Activated CD4-positive, alpha-beta T cell treated with anti-CD3 and anti-CD28 coated beads, Interleukin-2, amount 10 ng/mL, durations not matched to agents 7 days and 5 days (primary cell): ENCODE measurements at regions of chrX and their contacts with region 1.

Region 1: DNA sequence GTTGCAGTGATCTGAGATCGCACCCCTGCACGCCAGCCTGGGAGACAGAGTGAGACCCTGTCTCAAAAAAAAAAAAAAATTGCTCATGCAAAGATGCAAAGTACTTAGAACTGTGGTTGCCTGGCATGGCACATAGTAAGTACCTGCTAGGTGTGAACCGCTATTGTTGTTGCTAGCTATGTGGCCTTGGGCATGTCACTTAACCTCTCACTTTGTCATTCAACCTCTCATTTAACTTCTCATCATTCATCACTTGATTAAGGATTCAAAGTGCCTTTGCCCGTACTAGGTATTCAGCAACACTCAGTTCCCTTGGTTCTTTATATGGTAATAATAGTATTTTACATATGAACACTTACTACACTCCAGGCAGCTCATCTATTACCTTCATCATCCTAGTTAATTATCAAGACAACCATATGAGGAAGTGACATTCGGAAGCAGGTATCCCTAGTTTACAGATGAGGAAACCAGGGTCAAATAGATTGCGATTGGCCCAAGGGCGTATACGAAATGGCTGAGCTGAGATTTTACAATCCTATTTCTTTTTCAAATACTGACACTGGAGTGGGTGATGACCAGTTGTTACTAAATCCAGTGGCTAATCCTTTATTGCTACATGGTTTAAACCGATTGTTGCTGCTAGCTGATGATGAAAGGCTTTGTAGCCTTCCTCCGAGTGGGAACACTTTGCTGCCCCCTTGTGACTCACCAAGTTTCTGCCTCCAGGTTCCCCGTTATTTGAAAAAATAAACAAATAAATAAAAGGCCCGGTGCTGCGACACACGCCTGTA is 28.8 kb upstream of the SOWAHD start:
- DNase-seq: peak; percentile 71
- H3K4me3 Mint-ChIP-seq: no peak overlapping the region
- H3K27ac Mint-ChIP-seq: no peak overlapping the region
- H3K4me1 Mint-ChIP-seq: peaks cover 9% of the 10 kb centered on the region
- H3K27me3 Mint-ChIP-seq: peaks cover 2% of the 10 kb centered on the region

Region 2: DNA sequence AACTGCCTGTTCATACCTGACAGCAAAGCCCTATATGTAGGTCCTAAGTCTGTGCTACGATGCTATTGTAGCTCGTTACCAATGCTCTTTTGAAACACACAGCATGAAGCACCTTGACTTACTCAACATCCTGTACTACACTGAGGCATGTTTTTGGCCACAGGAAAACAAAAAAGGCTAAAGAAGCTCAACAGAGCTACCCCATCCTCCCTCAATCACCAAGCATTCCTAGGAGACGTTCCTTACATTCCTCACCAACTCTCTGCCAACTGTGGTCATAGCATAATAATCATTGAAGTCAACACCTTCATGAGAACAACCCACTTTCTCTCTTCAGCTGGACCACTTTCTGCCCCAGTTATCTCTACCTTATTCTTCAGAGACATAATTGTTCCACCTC is 404.1 kb before region 1 on chrX:
- CTCF ChIA-PET with region 1: no interaction called
- POLR2A ChIA-PET with region 1: no interaction called
- DNase-seq: no peak
- H3K4me3 Mint-ChIP-seq: no peak overlapping the region
- H3K27ac Mint-ChIP-seq: no peak overlapping the region
- H3K4me1 Mint-ChIP-seq: no peaks in the 10 kb centered on the region
- H3K27me3 Mint-ChIP-seq: peaks cover 2% of the 10 kb centered on the region

Region 3: GRCh38 chrX:119516157-119516702 is 213.4 kb before region 1 on chrX:
- CTCF ChIA-PET with region 1: interaction called, 13 read pairs
- POLR2A ChIA-PET with region 1: no interaction called
- DNase-seq: peak; percentile 56
- H3K4me3 Mint-ChIP-seq: no peak overlapping the region
- H3K27ac Mint-ChIP-seq: peak overlapping the region; percentile 82
- H3K4me1 Mint-ChIP-seq: peaks cover 8% of the 10 kb centered on the region
- H3K27me3 Mint-ChIP-seq: peaks cover 2% of the 10 kb centered on the region

Region 4: GRCh38 chrX:119606280-119607015 is 123.2 kb before region 1 on chrX and contains the start of gene NKRF:
- CTCF ChIA-PET with region 1: interaction called, 10 read pairs
- POLR2A ChIA-PET with region 1: no interaction called
- DNase-seq: peak; percentile 91
- H3K4me3 Mint-ChIP-seq: peak within 1 kb of the TSS; percentile 93
- H3K27ac Mint-ChIP-seq: peak within 1 kb of the TSS; percentile 97
- H3K4me1 Mint-ChIP-seq: peaks cover 35% of the 10 kb centered on the region
- H3K27me3 Mint-ChIP-seq: no peaks in the 10 kb centered on the region
- total RNA-seq, gene NKRF: 13.7 to 15.4 TPM

Region 5: GRCh38 chrX:119693040-119693995 is 36.3 kb before region 1 on chrX and contains the start of gene SEPTIN6:
- CTCF ChIA-PET with region 1: interaction called, 12 read pairs
- POLR2A ChIA-PET with region 1: interaction called, 3 read pairs
- DNase-seq: peak; percentile 87
- H3K4me3 Mint-ChIP-seq: peak within 1 kb of the TSS; percentile 85
- H3K27ac Mint-ChIP-seq: peak within 1 kb of the TSS; percentile 99
- H3K4me1 Mint-ChIP-seq: peaks cover 14% of the 10 kb centered on the region
- H3K27me3 Mint-ChIP-seq: no peaks in the 10 kb centered on the region
- total RNA-seq, gene SEPTIN6: 298 to 329 TPM

Region 6: DNA sequence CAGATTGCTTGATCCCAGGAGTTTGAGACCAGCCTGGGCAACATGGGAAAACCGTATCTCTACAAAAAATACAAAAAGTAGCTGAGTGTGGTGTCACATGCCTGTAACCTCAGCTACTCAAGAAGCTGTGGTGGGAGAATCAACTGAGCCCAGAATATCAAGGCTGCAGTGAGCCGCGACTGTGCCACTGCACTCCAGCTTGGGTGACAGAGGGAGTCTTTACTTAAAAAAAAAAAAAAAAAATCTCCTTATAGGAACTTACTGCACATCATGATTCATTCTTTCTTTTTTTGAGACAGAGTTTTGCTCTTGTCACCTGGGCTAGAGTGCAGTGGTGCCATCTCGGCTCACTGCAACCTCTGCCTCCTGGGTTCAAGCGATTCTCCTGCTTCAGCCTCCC is 98.8 kb after region 1 on chrX:
- CTCF ChIA-PET with region 1: no interaction called
- POLR2A ChIA-PET with region 1: no interaction called
- DNase-seq: no peak
- H3K4me3 Mint-ChIP-seq: no peak overlapping the region
- H3K27ac Mint-ChIP-seq: no peak overlapping the region
- H3K4me1 Mint-ChIP-seq: peaks cover 10% of the 10 kb centered on the region
- H3K27me3 Mint-ChIP-seq: no peaks in the 10 kb centered on the region